CD8-positive, alpha-beta T cell (primary cell): ENCODE measurements at regions of chr4 and their contacts with region 1.

Region 1: GRCh38 chr4:102500696-102501446 is at the start of gene NFKB1:
- DNase-seq: peak; percentile 60 to 97 (median 78)
- ATAC-seq: peak; percentile 67
- H3K4me3 ChIP-seq: peak within 1 kb of the TSS; percentile 88 to 93
- H3K4me3 Mint-ChIP-seq: peak within 1 kb of the TSS; percentile 95
- H3K27ac ChIP-seq: peak within 1 kb of the TSS; percentile 95 to 100
- H3K27ac Mint-ChIP-seq: peak within 1 kb of the TSS; percentile 98
- H3K4me1 ChIP-seq: peaks cover 19% of the 10 kb centered on the region
- H3K4me1 Mint-ChIP-seq: peaks cover 29% of the 10 kb centered on the region
- H3K27me3 ChIP-seq: no peaks in the 10 kb centered on the region
- H3K27me3 Mint-ChIP-seq: no peaks in the 10 kb centered on the region
- CTCF ChIP-seq: no peak
- total RNA-seq, gene NFKB1: 278 to 289 TPM

Region 2: DNA sequence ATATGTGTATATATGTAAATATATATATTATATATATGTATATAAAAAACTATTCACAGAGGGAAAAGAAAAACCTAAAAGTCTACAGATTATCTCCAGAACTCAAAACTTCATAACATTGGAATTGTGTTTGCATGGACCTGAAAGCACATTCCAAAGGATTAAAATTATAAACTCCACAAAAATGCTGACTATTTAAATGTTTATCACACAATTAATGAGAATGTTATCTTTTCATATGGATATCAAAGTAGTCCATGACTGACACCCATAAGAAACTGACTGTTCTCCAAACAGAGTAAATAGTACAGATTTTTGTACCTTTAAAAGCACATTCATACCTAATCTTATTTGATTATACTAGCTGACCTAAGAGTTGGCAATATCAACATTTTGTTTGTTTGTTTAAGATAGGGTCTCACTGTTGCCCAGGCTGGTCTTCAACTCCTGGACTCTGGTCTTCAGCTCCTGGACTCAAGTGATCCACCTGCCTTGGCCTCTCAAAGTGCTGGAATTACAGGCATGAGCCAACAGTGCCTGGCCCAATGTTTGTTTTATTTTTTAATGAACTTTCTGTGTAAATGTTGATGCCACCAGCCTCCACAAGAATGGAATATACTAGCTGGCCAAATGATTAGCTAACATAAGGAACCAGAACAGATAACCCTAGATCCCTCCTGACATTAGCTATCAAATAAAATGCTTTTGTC is 205.6 kb before region 1 on chr4:
- CTCF ChIA-PET with region 1: no interaction called
- POLR2A ChIA-PET with region 1: no interaction called
- intact Hi-C with region 1: no loop called
- DNase-seq: no peak
- ATAC-seq: no peak
- H3K4me3 ChIP-seq: no peak overlapping the region
- H3K4me3 Mint-ChIP-seq: no peak overlapping the region
- H3K27ac ChIP-seq: no peak overlapping the region
- H3K27ac Mint-ChIP-seq: no peak overlapping the region
- H3K4me1 ChIP-seq: no peaks in the 10 kb centered on the region
- H3K4me1 Mint-ChIP-seq: peaks cover 2% of the 10 kb centered on the region
- H3K27me3 ChIP-seq: no peaks in the 10 kb centered on the region
- H3K27me3 Mint-ChIP-seq: no peaks in the 10 kb centered on the region
- CTCF ChIP-seq: no peak

Region 3: DNA sequence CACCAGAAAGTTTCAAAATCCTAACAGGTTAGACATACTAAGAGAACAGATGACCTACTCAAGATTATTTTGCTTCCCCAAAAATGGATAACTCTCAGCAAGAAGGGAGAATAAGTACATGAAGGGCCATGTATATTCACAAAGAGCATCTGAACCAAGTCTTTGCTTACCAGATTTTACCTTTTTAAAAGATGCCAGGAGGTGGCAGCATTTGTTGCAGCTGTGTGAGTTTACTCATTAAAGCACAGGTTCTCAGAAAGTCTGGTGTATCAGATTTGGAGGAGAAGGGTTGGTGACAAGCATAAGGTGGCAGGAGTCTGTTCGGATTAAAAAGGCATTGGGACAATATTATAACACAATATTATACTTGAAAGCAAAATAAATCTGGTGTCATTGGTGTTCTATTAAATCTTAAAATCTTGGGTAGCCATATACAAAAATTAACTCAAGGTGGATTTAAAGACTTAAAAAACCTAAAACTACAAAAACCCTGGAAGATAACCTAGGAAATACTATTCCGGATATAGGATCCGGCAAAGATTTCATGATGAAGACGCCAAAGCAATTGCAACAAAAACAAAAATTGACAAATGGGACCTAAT is 51.0 kb before region 1 on chr4:
- CTCF ChIA-PET with region 1: interaction called, 3 read pairs
- POLR2A ChIA-PET with region 1: no interaction called
- intact Hi-C with region 1: loop called in 1 of 2 experiments (anchors 2 kb)
- DNase-seq: peak; percentile 21 to 82 (median 48)
- ATAC-seq: peak; percentile 89
- H3K4me3 ChIP-seq: no peak overlapping the region
- H3K4me3 Mint-ChIP-seq: no peak overlapping the region
- H3K27ac ChIP-seq: no peak overlapping the region
- H3K27ac Mint-ChIP-seq: no peak overlapping the region
- H3K4me1 ChIP-seq: no peaks in the 10 kb centered on the region
- H3K4me1 Mint-ChIP-seq: peaks cover 10% of the 10 kb centered on the region
- H3K27me3 ChIP-seq: no peaks in the 10 kb centered on the region
- H3K27me3 Mint-ChIP-seq: no peaks in the 10 kb centered on the region
- CTCF ChIP-seq: peak; percentile 83

Region 4: GRCh38 chr4:102535398-102536082 is 34.7 kb after region 1 on chr4:
- CTCF ChIA-PET with region 1: interaction called, 3 read pairs
- POLR2A ChIA-PET with region 1: interaction called, 4 read pairs
- intact Hi-C with region 1: loop called (anchors 2 to 5 kb)
- DNase-seq: peak in 1 of 9 experiments; percentile 55
- ATAC-seq: peak; percentile 77
- H3K4me3 ChIP-seq: no peak overlapping the region
- H3K4me3 Mint-ChIP-seq: no peak overlapping the region
- H3K27ac ChIP-seq: no peak overlapping the region
- H3K27ac Mint-ChIP-seq: no peak overlapping the region
- H3K4me1 ChIP-seq: peaks cover 42% of the 10 kb centered on the region
- H3K4me1 Mint-ChIP-seq: peaks cover 55% of the 10 kb centered on the region
- H3K27me3 ChIP-seq: no peaks in the 10 kb centered on the region
- H3K27me3 Mint-ChIP-seq: no peaks in the 10 kb centered on the region
- CTCF ChIP-seq: no peak

Region 5: DNA sequence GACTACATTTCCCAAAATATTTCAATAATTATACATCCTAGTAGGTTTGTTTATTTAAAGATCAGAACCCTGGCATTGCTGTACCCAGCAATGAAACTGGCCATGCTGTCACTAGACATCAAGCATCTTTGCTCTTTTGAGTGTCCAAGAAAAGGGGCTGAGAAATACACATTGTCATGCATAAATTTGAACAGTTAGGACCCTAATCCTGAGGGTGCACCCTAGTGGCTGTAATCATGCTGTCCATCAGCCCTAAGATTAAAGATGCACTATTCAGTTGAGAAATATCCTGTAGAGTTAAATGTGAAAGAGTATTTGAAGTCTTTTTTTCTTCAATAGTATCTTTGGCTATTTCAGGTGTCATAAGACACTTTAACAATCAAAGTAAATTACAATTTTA is 109.1 kb after region 1 on chr4:
- CTCF ChIA-PET with region 1: interaction called, 3 read pairs
- POLR2A ChIA-PET with region 1: interaction called, 18 read pairs
- intact Hi-C with region 1: loop called (anchors 5 kb)
- DNase-seq: peak in 1 of 9 experiments; percentile 41
- ATAC-seq: no peak
- H3K4me3 ChIP-seq: no peak overlapping the region
- H3K4me3 Mint-ChIP-seq: no peak overlapping the region
- H3K27ac ChIP-seq: peak overlapping the region in 1 of 2 experiments; percentile 90
- H3K27ac Mint-ChIP-seq: peak overlapping the region; percentile 39
- H3K4me1 ChIP-seq: peaks cover 67% of the 10 kb centered on the region
- H3K4me1 Mint-ChIP-seq: peaks cover 78% of the 10 kb centered on the region
- H3K27me3 ChIP-seq: no peaks in the 10 kb centered on the region
- H3K27me3 Mint-ChIP-seq: no peaks in the 10 kb centered on the region
- CTCF ChIP-seq: no peak

Region 6: DNA sequence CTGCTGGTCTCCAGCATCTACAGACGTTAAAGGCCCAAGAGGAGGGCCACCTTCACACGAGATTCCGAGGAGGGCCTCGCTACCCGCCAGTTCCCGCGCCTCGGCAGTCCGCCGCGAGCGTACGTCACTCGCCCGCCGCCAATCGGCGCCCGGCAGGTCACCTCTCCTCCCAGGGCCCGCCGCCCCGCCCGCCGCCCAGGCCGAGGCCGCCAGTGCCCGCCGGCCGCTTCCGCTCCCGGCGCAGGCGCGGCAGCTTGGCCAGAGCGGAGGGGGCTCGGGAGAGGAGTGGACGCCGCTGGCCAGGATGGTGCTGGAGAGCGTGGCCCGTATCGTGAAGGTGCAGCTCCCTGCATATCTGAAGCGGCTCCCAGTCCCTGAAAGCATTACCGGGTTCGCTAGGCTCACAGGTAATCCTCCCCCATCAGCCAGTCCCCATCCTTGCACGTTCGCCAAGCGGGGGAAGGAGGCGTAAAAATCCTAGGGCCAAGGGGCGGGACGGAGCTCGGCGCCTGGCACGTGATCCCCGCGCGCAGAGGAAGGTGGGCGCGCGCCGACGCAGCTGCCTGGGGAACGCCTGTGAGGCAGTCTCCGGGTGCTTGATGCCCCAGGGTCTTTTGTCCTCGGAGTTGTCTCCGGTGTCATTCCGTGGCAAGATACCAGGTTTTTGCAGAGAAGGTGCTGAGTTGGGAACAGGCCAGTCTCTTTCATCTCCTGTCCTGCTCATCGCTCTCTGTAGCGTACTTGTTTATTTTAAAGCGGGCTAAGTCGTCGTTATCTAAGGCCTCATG is 368.1 kb after region 1 on chr4 and contains the start of gene CISD2:
- CTCF ChIA-PET with region 1: no interaction called
- POLR2A ChIA-PET with region 1: interaction called, 12 read pairs
- intact Hi-C with region 1: loop called in 1 of 2 experiments (anchors 1 kb)
- DNase-seq: peak; percentile 83 to 97 (median 91)
- ATAC-seq: peak; percentile 81
- H3K4me3 ChIP-seq: peak within 1 kb of the TSS; percentile 74 to 77
- H3K4me3 Mint-ChIP-seq: peak within 1 kb of the TSS; percentile 89
- H3K27ac ChIP-seq: peak within 1 kb of the TSS; percentile 89 to 94
- H3K27ac Mint-ChIP-seq: peak within 1 kb of the TSS; percentile 99
- H3K4me1 ChIP-seq: peaks cover 37% of the 10 kb centered on the region
- H3K4me1 Mint-ChIP-seq: peaks cover 66% of the 10 kb centered on the region
- H3K27me3 ChIP-seq: no peaks in the 10 kb centered on the region
- H3K27me3 Mint-ChIP-seq: no peaks in the 10 kb centered on the region
- CTCF ChIP-seq: no peak
- total RNA-seq, gene CISD2: 14.3 to 14.4 TPM

Region 7: GRCh38 chr4:103198111-103198765 is 697.4 kb after region 1 on chr4 and contains the start of gene CENPE:
- CTCF ChIA-PET with region 1: no interaction called
- POLR2A ChIA-PET with region 1: no interaction called
- intact Hi-C with region 1: loop called in 1 of 2 experiments (anchors 5 kb)
- DNase-seq: peak; percentile 76 to 92 (median 84)
- ATAC-seq: peak; percentile 84
- H3K4me3 ChIP-seq: peak within 1 kb of the TSS; percentile 72 to 81
- H3K4me3 Mint-ChIP-seq: peak within 1 kb of the TSS; percentile 98
- H3K27ac ChIP-seq: peak within 1 kb of the TSS; percentile 85 to 87
- H3K27ac Mint-ChIP-seq: peak within 1 kb of the TSS; percentile 99
- H3K4me1 ChIP-seq: peaks cover 11% of the 10 kb centered on the region
- H3K4me1 Mint-ChIP-seq: peaks cover 12% of the 10 kb centered on the region
- H3K27me3 ChIP-seq: no peaks in the 10 kb centered on the region
- H3K27me3 Mint-ChIP-seq: no peaks in the 10 kb centered on the region
- CTCF ChIP-seq: no peak
- total RNA-seq, gene CENPE: 0.97 to 3.1 TPM